Heart left ventricle (tissue), 16 donors: ENCODE measurements at regions of chr3 and their contacts with region 1.

Region 1: DNA sequence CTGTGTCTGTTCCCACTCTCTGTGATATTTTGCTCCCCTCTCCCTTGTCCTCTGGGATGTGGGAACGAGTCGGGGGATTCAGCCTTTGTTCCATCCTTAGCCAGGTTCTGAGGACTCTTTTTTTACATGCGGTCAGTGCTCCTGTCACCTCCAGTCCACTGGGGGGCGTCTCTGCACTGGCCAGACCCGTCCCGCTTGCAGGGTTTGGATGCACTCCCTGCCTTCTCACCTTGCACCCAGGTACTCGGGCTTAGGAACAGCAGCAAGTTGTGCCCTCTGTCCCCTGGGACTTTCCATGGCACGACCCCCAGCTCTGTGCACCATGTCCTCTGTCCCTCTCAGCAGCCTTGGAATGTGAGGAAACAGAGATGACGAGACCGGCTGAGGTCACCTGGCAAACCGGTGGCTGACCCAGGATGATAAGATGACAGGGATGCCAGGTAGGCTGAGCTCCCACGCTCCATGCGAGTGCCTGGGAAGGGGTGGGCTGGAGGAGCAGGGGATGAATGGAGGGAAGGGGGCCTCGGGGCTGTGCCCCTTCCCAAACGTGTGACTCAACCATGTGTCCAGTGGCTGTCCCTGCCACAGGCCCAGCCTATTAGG is 27.3 kb upstream of the FGD5 start:
- DNase-seq: peak; percentile 73 to 81 (median 75)
- ATAC-seq: peak; percentile 48 to 76 (median 69)
- H3K4me3 ChIP-seq: no peak overlapping the region
- H3K27ac ChIP-seq: no peak overlapping the region
- H3K4me1 ChIP-seq: peaks cover 0 to 39% (median 27%) of the 10 kb centered on the region in 12 donors
- H3K27me3 ChIP-seq: peaks cover 0 to 5% (median 0%) of the 10 kb centered on the region in 9 donors
- CTCF ChIP-seq: peak; percentile 59 to 83 (median 70)
- POLR2A ChIP-seq: no peak

Region 2: DNA sequence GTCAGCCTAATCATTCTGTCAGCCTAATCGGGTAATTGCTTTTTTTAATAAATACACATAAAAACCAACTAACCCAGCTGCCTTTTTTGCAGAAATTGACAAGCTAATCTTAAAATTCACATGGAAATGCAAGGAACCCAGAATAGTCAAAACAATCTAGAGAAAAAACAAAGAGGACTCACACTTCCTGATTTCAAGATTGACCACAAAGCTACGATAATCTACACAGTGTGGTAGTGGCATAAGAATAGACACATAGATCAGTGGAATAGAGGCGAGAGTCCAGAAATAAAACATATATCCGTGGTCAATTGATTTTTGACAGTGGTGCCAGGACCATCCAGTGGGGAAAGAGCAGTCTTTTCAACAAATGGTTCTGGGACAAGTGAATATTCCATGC is 118.9 kb before region 1 on chr3:
- intact Hi-C with region 1: loop called in 1 of 10 experiments (anchors 5 kb)
- DNase-seq: no peak
- ATAC-seq: no peak
- H3K4me3 ChIP-seq: no peak overlapping the region
- H3K27ac ChIP-seq: no peak overlapping the region
- H3K4me1 ChIP-seq: no peaks in the 10 kb centered on the region
- H3K27me3 ChIP-seq: no peaks in the 10 kb centered on the region
- CTCF ChIP-seq: no peak
- POLR2A ChIP-seq: no peak

Region 3: GRCh38 chr3:14810070-14810784 is 18.8 kb after region 1 on chr3:
- intact Hi-C with region 1: loop called in 1 of 10 experiments (anchors 2 kb)
- DNase-seq: peak; percentile 61 to 73 (median 65)
- ATAC-seq: peak; percentile 56 to 77 (median 69)
- H3K4me3 ChIP-seq: peak overlapping the region; percentile 56 to 95 (median 77)
- H3K27ac ChIP-seq: peak overlapping the region; percentile 79 to 97 (median 90)
- H3K4me1 ChIP-seq: peaks cover 3 to 67% (median 38%) of the 10 kb centered on the region in 12 donors
- H3K27me3 ChIP-seq: peaks cover 0 to 35% (median 11%) of the 10 kb centered on the region in 9 donors
- CTCF ChIP-seq: no peak
- POLR2A ChIP-seq: no peak

Region 4: GRCh38 chr3:14902719-14903118 is 111.3 kb after region 1 on chr3:
- intact Hi-C with region 1: loop called in 1 of 10 experiments (anchors 5 kb)
- DNase-seq: peak; percentile 76 to 87 (median 87)
- ATAC-seq: peak; percentile 87 to 96 (median 92)
- H3K4me3 ChIP-seq: no peak overlapping the region
- H3K27ac ChIP-seq: peak overlapping the region in 5 of 12 donors; percentile 25 to 47 (median 34)
- H3K4me1 ChIP-seq: peaks cover 0 to 27% (median 12%) of the 10 kb centered on the region in 12 donors
- H3K27me3 ChIP-seq: no peaks in the 10 kb centered on the region
- CTCF ChIP-seq: peak in 5 of 12 donors; percentile 13 to 41 (median 25)
- POLR2A ChIP-seq: no peak

Region 5: DNA sequence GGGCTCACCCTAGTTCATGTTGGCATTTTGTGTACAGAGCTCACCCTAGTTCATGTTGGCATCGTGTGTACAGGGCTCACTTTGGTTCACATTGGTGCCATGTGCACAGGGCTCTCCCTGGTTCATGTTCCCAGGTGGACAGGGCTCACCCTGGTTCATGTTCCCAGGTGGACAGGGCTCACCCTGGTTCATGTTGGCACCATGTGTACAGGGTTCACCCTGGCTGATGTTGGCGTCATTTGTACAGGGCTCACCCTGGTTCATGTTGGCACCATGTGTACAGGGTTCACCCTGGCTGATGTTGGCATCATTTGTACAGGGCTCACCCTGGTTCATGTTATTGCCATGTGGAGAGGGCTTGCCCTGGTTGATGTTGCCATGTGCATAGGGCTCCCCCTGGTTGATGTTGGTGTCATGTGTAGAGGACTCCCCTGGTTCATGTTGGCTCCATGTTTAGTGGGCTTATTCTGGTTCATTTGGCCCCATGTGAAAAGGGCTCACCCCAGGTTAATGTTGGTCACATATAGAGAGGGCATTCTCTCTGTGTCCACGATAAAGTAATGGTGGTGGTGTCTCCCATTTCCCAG is 124.3 kb after region 1 on chr3:
- intact Hi-C with region 1: loop called in 7 of 10 experiments (anchors 2 to 5 kb)
- DNase-seq: no peak
- ATAC-seq: peak; percentile 6 to 47 (median 18)
- H3K4me3 ChIP-seq: no peak overlapping the region
- H3K27ac ChIP-seq: no peak overlapping the region
- H3K4me1 ChIP-seq: peaks cover 0 to 9% (median 1%) of the 10 kb centered on the region in 12 donors
- H3K27me3 ChIP-seq: no peaks in the 10 kb centered on the region
- CTCF ChIP-seq: peak in 7 of 12 donors; percentile 7 to 32 (median 14)
- POLR2A ChIP-seq: no peak